Aorta (tissue), 5 donors: ENCODE measurements at regions of chr10 and their contacts with region 1.

Region 1: GRCh38 chr10:122495406-122496340 is 34.3 kb downstream of the HTRA1 start:
- DNase-seq: peak in 1 of 2 donors; percentile 80
- ATAC-seq: peak; percentile 58
- H3K4me3 ChIP-seq: no peak overlapping the region
- H3K27ac ChIP-seq: peak overlapping the region; percentile 72 to 96
- H3K4me1 ChIP-seq: peaks cover 3 to 9% of the 10 kb centered on the region in 2 donors
- H3K27me3 ChIP-seq: no peaks in the 10 kb centered on the region

Region 2: GRCh38 chr10:122142641-122143237 is 352.9 kb before region 1 on chr10:
- intact Hi-C with region 1: loop called in 1 of 2 experiments (anchors 2 kb)
- DNase-seq: peak in 1 of 2 donors; percentile 89
- ATAC-seq: peak; percentile 56
- H3K4me3 ChIP-seq: no peak overlapping the region
- H3K27ac ChIP-seq: peak overlapping the region in 1 of 2 donors; percentile 65
- H3K4me1 ChIP-seq: peaks cover 0 to 5% of the 10 kb centered on the region in 2 donors
- H3K27me3 ChIP-seq: no peaks in the 10 kb centered on the region

Region 3: GRCh38 chr10:122374237-122374869 is 121.3 kb before region 1 on chr10 and contains the start of gene PLEKHA1:
- intact Hi-C with region 1: loop called in 1 of 2 experiments (anchors 2 kb)
- DNase-seq: peak; percentile 97 to 99
- ATAC-seq: peak; percentile 97
- H3K4me3 ChIP-seq: peak within 1 kb of the TSS; percentile 67 to 77
- H3K27ac ChIP-seq: peak within 1 kb of the TSS; percentile 65 to 89
- H3K4me1 ChIP-seq: no peaks in the 10 kb centered on the region
- H3K27me3 ChIP-seq: no peaks in the 10 kb centered on the region
- total RNA-seq, gene PLEKHA1: 39.8 to 46.1 TPM

Region 4: DNA sequence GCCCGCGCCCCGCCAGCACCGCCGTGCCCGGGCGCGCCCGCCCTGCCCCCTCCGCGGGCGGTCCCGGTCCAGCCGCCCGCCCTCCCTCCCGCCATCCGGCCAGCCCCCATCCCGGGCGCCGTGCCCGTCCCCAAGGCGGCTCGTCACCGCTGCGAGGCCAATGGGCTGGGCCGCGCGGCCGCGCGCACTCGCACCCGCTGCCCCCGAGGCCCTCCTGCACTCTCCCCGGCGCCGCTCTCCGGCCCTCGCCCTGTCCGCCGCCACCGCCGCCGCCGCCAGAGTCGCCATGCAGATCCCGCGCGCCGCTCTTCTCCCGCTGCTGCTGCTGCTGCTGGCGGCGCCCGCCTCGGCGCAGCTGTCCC is 34.3 kb before region 1 on chr10 and contains the start of gene HTRA1:
- intact Hi-C with region 1: loop called (anchors 2 to 5 kb)
- DNase-seq: peak; percentile 91 to 94
- ATAC-seq: peak; percentile 81
- H3K4me3 ChIP-seq: peak within 1 kb of the TSS; percentile 88 to 94
- H3K27ac ChIP-seq: peak within 1 kb of the TSS; percentile 45 to 95
- H3K4me1 ChIP-seq: peaks cover 1 to 3% of the 10 kb centered on the region in 2 donors
- H3K27me3 ChIP-seq: no peaks in the 10 kb centered on the region
- total RNA-seq, gene HTRA1: 261 to 386 TPM

Region 5: DNA sequence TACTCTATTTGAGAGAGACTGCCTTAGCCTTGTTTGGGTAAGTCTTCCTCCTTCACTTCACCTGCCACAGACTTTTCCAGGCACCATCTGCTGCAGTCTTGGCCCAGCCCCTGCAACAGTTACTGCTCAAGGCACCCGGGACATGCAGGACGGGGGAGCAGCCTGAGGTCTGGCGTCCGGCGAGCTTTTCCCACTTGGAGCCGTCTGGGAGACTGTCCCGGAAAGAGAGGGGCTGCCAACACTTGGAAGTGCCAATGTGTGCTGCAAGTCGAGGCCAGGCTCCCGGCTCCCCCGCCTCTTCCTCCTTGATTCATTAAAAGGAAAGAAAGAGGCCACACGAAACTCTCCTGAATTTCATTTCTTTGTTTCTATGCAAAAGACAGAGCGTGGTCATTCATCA is 20.6 kb before region 1 on chr10:
- intact Hi-C with region 1: loop called in 1 of 2 experiments (anchors 2 kb)
- DNase-seq: peak; percentile 87 to 92
- ATAC-seq: peak; percentile 78
- H3K4me3 ChIP-seq: peak overlapping the region in 1 of 2 donors; percentile 9
- H3K27ac ChIP-seq: peak overlapping the region; percentile 20 to 52
- H3K4me1 ChIP-seq: peaks cover 4 to 5% of the 10 kb centered on the region in 2 donors
- H3K27me3 ChIP-seq: no peaks in the 10 kb centered on the region